Right lobe of liver (tissue), 6 donors: ENCODE measurements at regions of chr9 and their contacts with region 1.

Region 1: DNA sequence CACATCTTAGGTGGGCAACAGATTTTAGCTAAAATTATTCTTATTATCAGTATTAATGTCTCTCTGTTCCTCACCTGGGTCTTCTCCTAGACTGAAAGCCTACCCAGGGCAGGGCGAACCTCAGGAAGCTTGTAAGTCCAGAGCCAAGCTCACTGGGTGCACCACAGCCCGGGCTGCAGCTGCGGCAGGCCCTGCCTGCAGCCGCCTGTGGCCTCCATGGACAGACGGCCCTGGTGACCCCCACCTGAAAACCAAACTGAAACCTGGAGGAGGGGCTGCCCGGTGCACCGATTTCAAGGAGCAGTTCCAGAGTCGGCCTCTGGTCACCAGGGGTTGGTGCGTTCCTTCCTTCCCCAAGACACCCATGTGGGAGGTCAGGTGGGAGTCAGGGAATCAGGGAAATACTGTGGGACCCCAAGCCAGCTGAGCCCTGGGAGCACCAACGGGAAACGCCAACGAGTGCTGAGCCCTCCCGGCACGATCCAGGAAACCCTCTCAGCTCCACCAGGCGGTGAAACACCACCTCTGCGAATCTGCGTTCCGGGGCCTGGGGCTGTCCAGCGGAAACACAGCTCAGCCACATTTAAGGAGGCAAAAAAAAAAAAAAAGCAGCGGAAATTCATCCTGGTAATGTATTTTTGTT is 68.6 kb upstream of the PPP1R26 start:
- DNase-seq: no peak
- ATAC-seq: no peak
- H3K4me3 ChIP-seq: no peak overlapping the region
- H3K27ac ChIP-seq: no peak overlapping the region
- H3K4me1 ChIP-seq: peaks cover 0 to 5% (median 0%) of the 10 kb centered on the region in 4 donors
- H3K27me3 ChIP-seq: no peaks in the 10 kb centered on the region
- CTCF ChIP-seq: no peak
- POLR2A ChIP-seq: no peak

Region 2: GRCh38 chr9:134698587-134699342 is 712.2 kb before region 1 on chr9:
- intact Hi-C with region 1: loop called in 1 of 2 experiments (anchors 10 kb)
- DNase-seq: peak; percentile 70 to 77 (median 74)
- ATAC-seq: peak; percentile 82 to 93 (median 87)
- H3K4me3 ChIP-seq: no peak overlapping the region
- H3K27ac ChIP-seq: no peak overlapping the region
- H3K4me1 ChIP-seq: no peaks in the 10 kb centered on the region
- H3K27me3 ChIP-seq: no peaks in the 10 kb centered on the region
- CTCF ChIP-seq: peak; percentile 69 to 95 (median 88)
- POLR2A ChIP-seq: no peak

Region 3: DNA sequence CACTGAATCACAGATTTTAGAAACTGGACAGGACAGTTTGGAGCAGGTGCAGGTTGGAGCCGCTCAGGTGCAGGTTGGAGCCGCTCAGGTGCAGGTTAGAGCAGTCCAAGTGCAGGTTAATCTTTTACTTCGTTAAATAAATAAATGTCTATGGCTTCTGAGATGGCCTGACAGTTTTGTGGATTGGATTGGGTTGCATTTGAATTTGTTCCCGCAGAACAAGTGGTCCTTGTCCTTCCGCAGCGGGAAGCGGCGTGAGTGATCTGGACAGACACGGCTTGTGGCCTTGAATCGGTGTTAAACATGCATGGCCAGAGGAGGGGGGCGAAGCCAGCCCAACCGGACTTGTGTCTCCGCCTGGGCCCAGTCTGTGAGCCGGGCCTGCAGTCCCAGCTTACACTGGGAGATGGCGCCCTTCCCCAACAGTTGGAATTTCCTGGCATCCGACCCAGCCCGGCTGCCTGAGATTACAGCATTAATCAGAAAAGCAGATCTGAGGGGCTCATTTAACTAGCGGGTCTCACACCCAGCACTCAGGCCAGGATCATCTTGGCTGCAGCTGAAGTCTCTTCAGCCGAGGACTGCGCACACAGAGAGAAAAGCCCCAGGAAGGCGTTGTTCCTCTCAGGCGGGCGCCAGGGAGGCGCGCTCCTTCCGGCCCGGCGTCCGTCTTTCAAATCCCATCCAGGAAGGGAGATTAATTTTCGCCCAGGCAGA is 325.0 kb before region 1 on chr9:
- intact Hi-C with region 1: loop called (anchors 5 kb)
- DNase-seq: peak; percentile 74 to 79 (median 76)
- ATAC-seq: peak; percentile 86 to 88 (median 88)
- H3K4me3 ChIP-seq: peak overlapping the region in 1 of 3 donors; percentile 12
- H3K27ac ChIP-seq: no peak overlapping the region
- H3K4me1 ChIP-seq: peaks cover 0 to 8% (median 0%) of the 10 kb centered on the region in 4 donors
- H3K27me3 ChIP-seq: peaks cover 0 to 22% of the 10 kb centered on the region in 2 donors
- CTCF ChIP-seq: peak; percentile 90 to 94 (median 92)
- POLR2A ChIP-seq: no peak

Region 4: GRCh38 chr9:135478858-135479468 is 68.0 kb after region 1 on chr9:
- intact Hi-C with region 1: no loop called
- DNase-seq: peak; percentile 40 to 73 (median 70)
- ATAC-seq: peak; percentile 77 to 83 (median 78)
- H3K4me3 ChIP-seq: peak overlapping the region; percentile 60 to 62 (median 62)
- H3K27ac ChIP-seq: peak overlapping the region in 2 of 3 donors; percentile 61 to 65
- H3K4me1 ChIP-seq: peaks cover 0 to 3% (median 0%) of the 10 kb centered on the region in 4 donors
- H3K27me3 ChIP-seq: no peaks in the 10 kb centered on the region
- CTCF ChIP-seq: peak in 2 of 4 donors; percentile 16 to 19
- POLR2A ChIP-seq: peak; percentile 35